ENCODE measurements at regions of chr2 and their contacts with region 1.

Region 1: GRCh38 chr2:51789918-51790317 is 758.0 kb upstream of the NRXN1 start:
- DNase-seq: no peak
- H3K4me3 ChIP-seq: no peak overlapping the region
- H3K27ac ChIP-seq: no peak overlapping the region
- H3K4me1 ChIP-seq: no peaks in the 10 kb centered on the region
- H3K27me3 ChIP-seq: no peaks in the 10 kb centered on the region
- CTCF ChIP-seq: no peak
- EP300 ChIP-seq: no peak
- POLR2A ChIP-seq: no peak

Region 2: DNA sequence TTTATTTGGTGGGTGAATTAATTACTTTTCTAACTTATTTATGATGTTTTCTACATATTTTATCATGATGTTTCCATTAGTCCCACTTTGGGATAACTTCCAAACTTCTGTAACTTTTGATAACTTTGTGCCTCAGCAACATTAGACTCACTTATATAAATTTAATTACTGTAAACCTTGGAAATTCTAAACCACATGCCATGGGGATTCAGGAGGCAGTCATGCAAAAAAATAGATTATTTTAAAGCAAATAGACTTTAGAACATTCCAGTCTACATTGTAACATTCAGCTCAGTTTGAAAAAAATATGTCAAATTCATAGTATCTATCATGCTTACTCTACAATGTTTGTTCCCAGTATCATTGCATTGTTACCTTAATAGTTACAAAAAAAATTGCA is 29.5 kb before region 1 on chr2:
- in situ Hi-C with region 1: no loop called
- intact Hi-C with region 1: loop called (anchors 2 kb)
- DNase-seq: no peak
- H3K4me3 ChIP-seq: no peak overlapping the region
- H3K27ac ChIP-seq: no peak overlapping the region
- H3K4me1 ChIP-seq: no peaks in the 10 kb centered on the region
- H3K27me3 ChIP-seq: no peaks in the 10 kb centered on the region
- CTCF ChIP-seq: no peak
- EP300 ChIP-seq: no peak
- POLR2A ChIP-seq: no peak